Activated B cell treated with CpG ODN at 0.5 μM for 24 hours (primary cell): ENCODE measurements at regions of chr10 and their contacts with region 1.

Region 1: DNA sequence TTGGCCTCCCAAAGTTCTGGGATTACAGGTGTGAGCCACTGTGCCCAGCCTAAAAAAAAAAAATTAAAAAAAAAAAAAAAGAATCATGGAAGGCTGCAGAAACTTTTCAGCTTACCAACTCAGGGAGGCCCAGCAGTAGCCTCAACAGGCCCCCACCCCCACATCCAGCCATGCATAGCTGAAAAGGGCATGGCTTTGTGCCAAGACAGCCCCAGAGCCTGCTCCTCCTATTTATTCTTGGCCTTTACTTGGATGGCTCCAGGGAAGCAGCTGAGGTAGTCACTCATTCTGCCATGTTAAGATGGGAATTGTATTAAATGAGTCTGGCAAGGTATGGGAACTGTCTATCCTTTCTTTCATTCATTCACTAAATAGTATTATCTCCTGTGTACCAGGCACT is 13.7 kb upstream of the CNNM2 start:
- DNase-seq: no peak
- ATAC-seq: no peak
- H3K4me3 Mint-ChIP-seq: no peak overlapping the region
- H3K27ac Mint-ChIP-seq: no peak overlapping the region
- H3K4me1 Mint-ChIP-seq: no peaks in the 10 kb centered on the region
- H3K27me3 Mint-ChIP-seq: no peaks in the 10 kb centered on the region
- CTCF ChIP-seq: no peak

Region 2: GRCh38 chr10:102752934-102753664 is 151.2 kb before region 1 on chr10:
- CTCF ChIA-PET with region 1: interaction called, 12 read pairs
- POLR2A ChIA-PET with region 1: no interaction called
- intact Hi-C with region 1: loop called (anchors 2 kb)
- DNase-seq: no peak
- ATAC-seq: peak; percentile 67
- H3K4me3 Mint-ChIP-seq: no peak overlapping the region
- H3K27ac Mint-ChIP-seq: no peak overlapping the region
- H3K4me1 Mint-ChIP-seq: peaks cover 49% of the 10 kb centered on the region
- H3K27me3 Mint-ChIP-seq: no peaks in the 10 kb centered on the region
- CTCF ChIP-seq: no peak

Region 3: GRCh38 chr10:102835007-102835482 is 69.3 kb before region 1 on chr10:
- CTCF ChIA-PET with region 1: interaction called, 21 read pairs
- POLR2A ChIA-PET with region 1: no interaction called
- intact Hi-C with region 1: loop called (anchors 1 kb)
- DNase-seq: peak; percentile 57
- ATAC-seq: peak; percentile 95
- H3K4me3 Mint-ChIP-seq: no peak overlapping the region
- H3K27ac Mint-ChIP-seq: no peak overlapping the region
- H3K4me1 Mint-ChIP-seq: peaks cover 2% of the 10 kb centered on the region
- H3K27me3 Mint-ChIP-seq: peaks cover 3% of the 10 kb centered on the region
- CTCF ChIP-seq: peak; percentile 21

Region 4: GRCh38 chr10:103231047-103231551 is 326.8 kb after region 1 on chr10:
- CTCF ChIA-PET with region 1: no interaction called
- POLR2A ChIA-PET with region 1: interaction called, 10 read pairs
- intact Hi-C with region 1: no loop called
- DNase-seq: no peak
- ATAC-seq: no peak
- H3K4me3 Mint-ChIP-seq: no peak overlapping the region
- H3K27ac Mint-ChIP-seq: no peak overlapping the region
- H3K4me1 Mint-ChIP-seq: peaks cover 4% of the 10 kb centered on the region
- H3K27me3 Mint-ChIP-seq: no peaks in the 10 kb centered on the region
- CTCF ChIP-seq: no peak

Region 5: DNA sequence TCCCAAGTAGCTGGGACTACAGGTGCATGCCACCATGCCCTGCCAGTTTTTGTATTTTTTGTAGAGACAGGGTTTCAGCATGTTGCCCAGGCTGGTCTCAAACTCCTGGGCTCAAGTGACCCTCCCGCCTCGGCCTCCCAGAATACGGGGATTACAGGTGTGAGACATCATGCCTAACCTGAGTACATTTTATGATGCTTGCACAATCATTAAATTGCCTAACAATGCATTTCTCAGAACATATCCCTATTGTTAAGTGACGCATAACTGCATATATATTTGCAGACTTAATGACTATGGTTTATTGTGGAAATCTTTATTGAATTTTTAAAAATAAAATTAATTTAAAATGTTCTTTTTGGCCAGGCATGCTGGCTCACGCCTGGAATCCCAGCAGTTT is 403.2 kb after region 1 on chr10:
- CTCF ChIA-PET with region 1: no interaction called
- POLR2A ChIA-PET with region 1: no interaction called
- intact Hi-C with region 1: no loop called
- DNase-seq: no peak
- ATAC-seq: no peak
- H3K4me3 Mint-ChIP-seq: no peak overlapping the region
- H3K27ac Mint-ChIP-seq: no peak overlapping the region
- H3K4me1 Mint-ChIP-seq: no peaks in the 10 kb centered on the region
- H3K27me3 Mint-ChIP-seq: no peaks in the 10 kb centered on the region
- CTCF ChIP-seq: no peak